ENCODE measurements at regions of chr16 and their contacts with region 1.

Region 1: GRCh38 chr16:56625140-56625942 is at the start of gene MT1E:
- DNase-seq: peak; percentile 81
- H3K4me3 Mint-ChIP-seq: peak within 1 kb of the TSS; percentile 95
- H3K27ac Mint-ChIP-seq: peak within 1 kb of the TSS; percentile 81
- H3K4me1 Mint-ChIP-seq: peaks cover 11% of the 10 kb centered on the region
- H3K27me3 Mint-ChIP-seq: no peaks in the 10 kb centered on the region
- CTCF ChIP-seq: no peak
- total RNA-seq, gene MT1E: 518 and 934 TPM in 2 replicates

Region 2: DNA sequence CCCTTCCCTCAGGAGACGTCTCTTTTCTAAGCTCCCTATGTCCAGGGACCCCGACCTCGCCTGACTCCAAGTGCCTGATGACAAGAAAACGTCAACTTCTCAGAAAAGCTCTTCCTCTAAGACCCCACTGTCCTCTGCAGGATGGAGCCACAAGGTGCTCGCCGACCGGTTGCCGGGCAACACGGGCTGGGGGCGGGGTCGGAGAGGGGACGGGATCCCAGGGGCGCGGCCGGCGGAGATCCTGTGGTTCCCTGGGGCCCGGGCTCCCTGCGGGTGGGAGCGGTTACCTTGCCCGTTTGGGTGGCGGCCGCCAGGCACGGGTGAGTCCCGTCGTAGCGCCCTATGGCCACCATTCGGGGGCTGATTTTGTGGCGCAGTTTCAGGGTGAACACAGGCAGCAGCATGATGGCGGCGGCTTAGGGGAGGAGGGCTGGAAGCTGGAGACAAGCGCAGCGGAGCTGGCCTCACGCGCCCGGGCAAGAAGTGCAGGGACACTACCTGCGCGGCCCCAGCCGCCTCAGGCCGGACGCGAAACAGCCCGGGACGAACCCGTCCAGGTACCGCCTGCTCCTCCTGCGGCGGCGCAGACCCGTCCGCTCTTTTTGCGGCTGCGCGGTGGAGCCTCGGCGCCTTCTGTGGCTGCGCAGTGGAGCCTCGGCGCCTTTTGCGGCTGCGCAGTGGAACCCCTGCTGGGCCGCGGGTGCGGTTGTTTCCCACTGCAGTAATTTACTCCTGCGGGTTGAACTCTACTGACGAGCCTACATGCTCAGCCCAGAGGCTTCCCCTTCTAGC is 105.7 kb before region 1 on chr16 and contains the start of gene BBS2:
- CTCF ChIA-PET with region 1: no interaction called
- POLR2A ChIA-PET with region 1: interaction called, 10 read pairs
- intact Hi-C with region 1: no loop called
- DNase-seq: peak; percentile 83
- H3K4me3 Mint-ChIP-seq: peak within 1 kb of the TSS; percentile 81
- H3K27ac Mint-ChIP-seq: peak within 1 kb of the TSS; percentile 83
- H3K4me1 Mint-ChIP-seq: peaks cover 29% of the 10 kb centered on the region
- H3K27me3 Mint-ChIP-seq: no peaks in the 10 kb centered on the region
- CTCF ChIP-seq: no peak
- total RNA-seq, gene BBS2: 23.9 and 25.8 TPM in 2 replicates

Region 3: DNA sequence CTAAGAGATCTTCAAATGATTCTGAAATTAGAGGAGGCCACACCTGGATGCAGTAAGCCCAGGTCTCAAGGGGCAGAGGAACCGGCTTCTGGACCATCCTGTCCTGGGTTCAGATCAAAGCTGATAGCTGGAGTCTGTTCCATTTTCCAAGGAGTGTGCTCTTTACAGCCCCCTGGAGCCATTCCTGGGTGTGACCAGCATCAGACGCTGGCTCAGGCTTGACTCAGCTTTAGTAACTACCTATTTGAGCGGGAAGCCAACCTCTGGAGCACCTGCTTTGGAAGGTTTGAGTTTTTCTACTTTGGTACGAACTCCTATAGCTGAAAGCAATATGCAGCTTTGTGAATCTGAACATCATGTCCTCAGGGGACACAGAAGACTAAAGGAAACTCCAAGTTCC is 92.6 kb before region 1 on chr16:
- CTCF ChIA-PET with region 1: no interaction called
- POLR2A ChIA-PET with region 1: no interaction called
- intact Hi-C with region 1: no loop called
- DNase-seq: no peak
- H3K4me3 Mint-ChIP-seq: no peak overlapping the region
- H3K27ac Mint-ChIP-seq: no peak overlapping the region
- H3K4me1 Mint-ChIP-seq: peaks cover 10% of the 10 kb centered on the region
- H3K27me3 Mint-ChIP-seq: no peaks in the 10 kb centered on the region
- CTCF ChIP-seq: no peak

Region 4: GRCh38 chr16:56637814-56638750 is 12.7 kb after region 1 on chr16 and contains the start of gene MT1A:
- CTCF ChIA-PET with region 1: interaction called, 5 read pairs
- POLR2A ChIA-PET with region 1: interaction called, 27 read pairs
- intact Hi-C with region 1: no loop called
- DNase-seq: no peak
- H3K4me3 Mint-ChIP-seq: no peak within 1 kb of the TSS
- H3K27ac Mint-ChIP-seq: no peak within 1 kb of the TSS
- H3K4me1 Mint-ChIP-seq: peaks cover 20% of the 10 kb centered on the region
- H3K27me3 Mint-ChIP-seq: no peaks in the 10 kb centered on the region
- CTCF ChIP-seq: no peak
- total RNA-seq, gene MT1A: not detected in 2 replicates

Region 5: DNA sequence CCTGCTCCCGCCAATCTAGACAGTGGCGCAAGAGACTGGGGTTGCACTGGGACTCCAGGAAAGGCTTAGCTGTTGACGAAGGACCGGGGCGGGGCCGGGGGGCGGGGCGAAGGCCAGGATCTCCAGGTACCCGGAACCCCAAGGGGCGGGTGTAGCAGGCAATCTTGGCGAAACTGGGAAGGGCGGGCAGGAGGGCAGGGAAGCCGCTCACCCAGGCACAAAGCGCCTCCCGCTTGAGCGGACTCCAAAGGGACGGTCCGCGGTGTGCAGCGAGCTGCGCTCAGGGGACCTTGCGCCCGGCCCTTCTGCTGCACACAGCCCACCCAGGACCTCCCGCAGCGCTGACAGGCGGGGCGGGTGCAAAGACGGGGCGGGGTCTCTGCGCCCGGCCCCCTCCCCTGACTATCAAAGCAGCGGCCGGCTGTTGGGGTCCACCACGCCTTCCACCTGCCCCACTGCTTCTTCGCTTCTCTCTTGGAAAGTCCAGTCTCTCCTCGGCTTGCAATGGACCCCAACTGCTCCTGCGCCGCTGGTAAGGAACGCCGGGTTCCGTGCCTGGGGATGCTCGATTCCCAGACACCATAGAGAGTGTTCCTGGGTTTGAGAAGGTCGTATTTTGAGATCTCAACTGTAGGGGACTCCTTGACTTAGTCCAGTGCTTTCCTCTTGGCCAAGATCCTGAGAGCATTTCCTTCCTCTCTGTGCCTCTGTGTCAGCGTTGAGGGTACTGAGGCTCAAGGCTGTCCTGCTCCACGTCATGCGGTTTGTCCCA is 32.4 kb after region 1 on chr16 and contains the start of gene MT1F:
- CTCF ChIA-PET with region 1: no interaction called
- POLR2A ChIA-PET with region 1: interaction called, 60 read pairs
- intact Hi-C with region 1: no loop called
- DNase-seq: peak; percentile 95
- H3K4me3 Mint-ChIP-seq: peak within 1 kb of the TSS; percentile 77
- H3K27ac Mint-ChIP-seq: no peak within 1 kb of the TSS
- H3K4me1 Mint-ChIP-seq: peaks cover 21% of the 10 kb centered on the region
- H3K27me3 Mint-ChIP-seq: no peaks in the 10 kb centered on the region
- CTCF ChIP-seq: no peak
- total RNA-seq, gene MT1F: 1.7 and 2.4 TPM in 2 replicates

Region 6: GRCh38 chr16:56691885-56692284 is 66.5 kb after region 1 on chr16:
- CTCF ChIA-PET with region 1: no interaction called
- POLR2A ChIA-PET with region 1: interaction called, 444 read pairs
- intact Hi-C with region 1: no loop called
- DNase-seq: peak; percentile 96
- H3K4me3 Mint-ChIP-seq: no peak overlapping the region
- H3K27ac Mint-ChIP-seq: peak overlapping the region; percentile 73
- H3K4me1 Mint-ChIP-seq: peaks cover 17% of the 10 kb centered on the region
- H3K27me3 Mint-ChIP-seq: no peaks in the 10 kb centered on the region
- CTCF ChIP-seq: no peak